ENCODE measurements at regions of chr11 and their contacts with region 1.

Region 1: DNA sequence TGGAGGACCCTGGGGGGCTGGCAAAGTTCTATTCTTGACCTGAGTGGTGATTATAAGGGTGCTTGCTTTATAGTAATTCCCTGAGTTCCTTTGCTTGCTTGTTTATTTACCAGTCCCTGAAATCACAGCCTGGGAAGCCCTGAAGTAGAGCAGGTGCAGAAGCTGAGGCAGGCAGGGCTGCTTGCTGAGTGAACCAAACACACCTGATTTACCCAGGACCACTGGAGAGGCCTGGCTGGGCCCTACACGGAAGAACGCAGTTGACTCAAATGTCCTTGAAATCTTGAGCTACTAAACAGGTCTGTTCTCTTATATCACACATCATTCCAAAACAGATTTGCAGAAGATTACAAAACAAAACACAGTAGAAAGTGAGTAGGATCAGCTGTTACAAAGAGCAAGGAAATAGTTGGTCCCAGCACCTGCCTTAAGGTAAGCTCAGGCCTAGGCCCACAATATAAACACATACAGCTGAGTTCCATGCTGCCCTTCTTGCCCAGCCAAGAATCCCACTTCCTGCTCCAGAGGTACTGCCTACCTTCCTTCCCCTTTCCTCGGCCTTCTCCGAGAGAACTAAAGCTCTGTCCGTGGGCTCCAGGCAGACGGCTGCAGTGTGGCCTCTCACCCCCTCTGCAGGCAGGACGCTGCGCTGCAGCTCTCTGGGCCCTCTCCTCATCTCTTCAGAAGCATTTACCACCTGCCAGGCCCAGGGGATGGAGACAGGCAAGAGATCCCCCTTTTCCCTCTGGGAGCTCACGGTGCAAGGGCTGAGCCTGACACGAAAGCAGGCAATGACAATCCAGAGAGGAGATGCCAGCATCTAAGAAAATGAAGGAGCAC is 46.1 kb upstream of the SCUBE2 start:
- DNase-seq: peak; percentile 82 to 93 (median 85)
- H3K4me3 ChIP-seq: no peak overlapping the region
- H3K27ac ChIP-seq: peak overlapping the region; percentile 29 to 58
- H3K4me1 ChIP-seq: peaks cover 0 to 31% (median 22%) of the 10 kb centered on the region in 3 donors
- H3K27me3 ChIP-seq: no peaks in the 10 kb centered on the region
- CTCF ChIP-seq: peak; percentile 82

Region 2: GRCh38 chr11:9015677-9016076 is 121.8 kb before region 1 on chr11:
- intact Hi-C with region 1: loop called (anchors 10 kb)
- DNase-seq: peak in 4 of 5 donors; percentile 67 to 87 (median 70)
- H3K4me3 ChIP-seq: no peak overlapping the region
- H3K27ac ChIP-seq: no peak overlapping the region
- H3K4me1 ChIP-seq: peaks cover 0 to 4% (median 0%) of the 10 kb centered on the region in 3 donors
- H3K27me3 ChIP-seq: no peaks in the 10 kb centered on the region
- CTCF ChIP-seq: peak; percentile 84

Measured in kidney (tissue), 22 donors.